Gastrocnemius medialis (tissue), 4 donors: ENCODE measurements at regions of chr4 and their contacts with region 1.

Region 1: GRCh38 chr4:133483600-133484246 is 334.6 kb downstream of the PCDH10 start:
- DNase-seq: no peak
- ATAC-seq: no peak
- H3K4me3 ChIP-seq: no peak overlapping the region
- H3K27ac ChIP-seq: no peak overlapping the region
- H3K4me1 ChIP-seq: no peaks in the 10 kb centered on the region
- H3K27me3 ChIP-seq: no peaks in the 10 kb centered on the region
- CTCF ChIP-seq: no peak
- POLR2A ChIP-seq: no peak

Region 2: DNA sequence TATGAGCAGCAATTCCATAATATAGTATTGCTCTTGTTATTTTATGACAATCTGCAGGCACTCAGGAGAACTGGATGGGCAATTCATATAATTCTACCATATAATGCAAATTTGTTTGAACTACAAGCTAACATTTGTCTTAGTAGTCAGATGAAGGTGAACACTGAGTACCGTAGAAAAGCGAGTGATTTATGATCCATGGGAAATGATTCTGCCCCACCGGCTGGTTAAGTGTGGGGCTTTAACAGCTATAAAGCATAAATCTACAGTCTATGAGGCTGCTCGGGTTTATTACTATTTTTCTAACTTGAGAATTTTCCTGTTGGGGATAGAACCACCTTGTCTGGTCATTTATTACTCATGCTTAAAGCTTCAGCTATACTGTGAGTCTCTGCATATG is 59.1 kb before region 1 on chr4:
- in situ Hi-C with region 1: no loop called
- intact Hi-C with region 1: no loop called
- DNase-seq: no peak
- ATAC-seq: no peak
- H3K4me3 ChIP-seq: no peak overlapping the region
- H3K27ac ChIP-seq: no peak overlapping the region
- H3K4me1 ChIP-seq: no peaks in the 10 kb centered on the region
- H3K27me3 ChIP-seq: no peaks in the 10 kb centered on the region
- CTCF ChIP-seq: no peak
- POLR2A ChIP-seq: no peak

Region 3: DNA sequence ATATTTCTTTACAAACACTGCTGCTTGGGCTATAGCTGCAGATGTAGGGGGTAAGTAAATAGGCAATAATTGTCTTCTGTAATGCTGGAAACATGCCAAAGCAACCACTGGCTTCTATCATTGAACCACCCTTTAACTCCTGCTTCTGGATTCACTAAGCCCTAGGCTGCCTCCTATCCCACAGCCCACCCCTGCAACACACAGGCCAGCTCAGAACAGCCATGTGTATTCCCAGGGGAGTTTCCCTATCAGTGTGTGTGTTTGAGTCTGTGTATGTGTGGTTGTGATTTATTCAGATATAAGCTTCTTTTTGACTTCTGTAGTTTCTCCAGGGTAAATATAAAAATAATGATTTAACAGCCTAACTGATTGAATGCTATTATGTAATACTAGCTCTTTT is 43.3 kb before region 1 on chr4:
- in situ Hi-C with region 1: no loop called
- intact Hi-C with region 1: loop called (anchors 2 kb)
- DNase-seq: no peak
- ATAC-seq: no peak
- H3K4me3 ChIP-seq: no peak overlapping the region
- H3K27ac ChIP-seq: no peak overlapping the region
- H3K4me1 ChIP-seq: no peaks in the 10 kb centered on the region
- H3K27me3 ChIP-seq: no peaks in the 10 kb centered on the region
- CTCF ChIP-seq: no peak
- POLR2A ChIP-seq: no peak

Region 4: GRCh38 chr4:133741766-133742165 is 258.0 kb after region 1 on chr4:
- in situ Hi-C with region 1: no loop called
- intact Hi-C with region 1: no loop called
- DNase-seq: no peak
- ATAC-seq: no peak
- H3K4me3 ChIP-seq: no peak overlapping the region
- H3K27ac ChIP-seq: no peak overlapping the region
- H3K4me1 ChIP-seq: no peaks in the 10 kb centered on the region
- H3K27me3 ChIP-seq: no peaks in the 10 kb centered on the region
- CTCF ChIP-seq: no peak
- POLR2A ChIP-seq: no peak